Calu3 (cell line): ENCODE measurements at regions of chr17 and their contacts with region 1.

Region 1: DNA sequence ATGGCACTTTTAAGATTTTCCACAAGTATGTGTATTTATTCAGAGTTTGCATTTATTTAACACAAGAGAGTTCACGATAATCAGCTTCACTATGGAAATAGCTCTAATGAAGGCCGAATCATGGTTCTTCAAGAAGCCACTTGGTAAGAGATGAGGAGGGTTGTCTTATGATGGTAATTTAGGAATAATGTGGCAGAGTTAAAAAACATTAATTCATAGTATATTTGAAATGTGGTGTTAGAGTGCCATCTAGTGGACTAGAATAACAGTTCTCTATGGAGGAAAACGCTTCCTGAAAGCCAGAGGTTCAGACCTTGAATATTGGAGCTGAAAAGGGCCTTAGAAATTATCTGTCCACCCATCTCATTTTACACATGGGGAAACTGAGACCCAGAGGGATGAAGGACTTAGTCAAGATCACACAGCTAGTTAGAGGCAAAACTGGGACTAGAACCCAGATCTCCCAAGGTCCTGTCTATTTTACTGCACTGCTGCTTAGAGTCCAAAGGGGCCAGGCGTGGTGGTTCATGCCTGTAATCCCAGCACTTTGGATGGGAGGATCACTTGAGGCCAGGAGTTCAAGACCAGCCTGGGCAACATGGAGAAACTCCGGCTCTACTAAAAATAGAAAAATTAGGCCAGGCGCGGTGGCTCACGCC is 33.8 kb upstream of the KPNB1 start:
- DNase-seq: no peak
- H3K4me3 Mint-ChIP-seq: no peak overlapping the region
- H3K27ac Mint-ChIP-seq: peak overlapping the region; percentile 65
- H3K4me1 Mint-ChIP-seq: peaks cover 37% of the 10 kb centered on the region
- H3K27me3 Mint-ChIP-seq: no peaks in the 10 kb centered on the region
- CTCF ChIP-seq: peak; percentile 72

Region 2: DNA sequence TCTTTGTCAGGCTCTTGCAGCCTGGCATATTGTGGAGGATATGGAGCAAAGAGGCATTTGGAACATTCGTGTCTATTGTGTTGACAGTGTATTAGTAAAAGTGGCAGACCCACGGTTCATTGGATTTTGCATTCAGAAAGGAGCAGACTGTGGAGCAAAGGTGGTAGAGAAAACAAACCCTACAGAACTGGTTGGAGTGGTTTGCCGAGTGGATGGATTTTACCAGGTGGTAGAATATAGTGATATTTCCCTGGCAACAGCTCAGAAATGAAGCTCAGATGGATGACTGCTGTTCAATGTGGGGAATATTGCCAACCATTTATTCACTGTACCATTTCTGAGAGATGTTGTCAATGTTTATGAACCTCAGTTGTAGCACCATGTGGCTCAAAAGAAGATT is 247.6 kb before region 1 on chr17:
- CTCF ChIA-PET with region 1: no interaction called
- intact Hi-C with region 1: loop called (anchors 10 kb)
- DNase-seq: peak; percentile 21
- H3K4me3 Mint-ChIP-seq: no peak overlapping the region
- H3K27ac Mint-ChIP-seq: no peak overlapping the region
- H3K4me1 Mint-ChIP-seq: no peaks in the 10 kb centered on the region
- H3K27me3 Mint-ChIP-seq: no peaks in the 10 kb centered on the region
- CTCF ChIP-seq: no peak

Region 3: DNA sequence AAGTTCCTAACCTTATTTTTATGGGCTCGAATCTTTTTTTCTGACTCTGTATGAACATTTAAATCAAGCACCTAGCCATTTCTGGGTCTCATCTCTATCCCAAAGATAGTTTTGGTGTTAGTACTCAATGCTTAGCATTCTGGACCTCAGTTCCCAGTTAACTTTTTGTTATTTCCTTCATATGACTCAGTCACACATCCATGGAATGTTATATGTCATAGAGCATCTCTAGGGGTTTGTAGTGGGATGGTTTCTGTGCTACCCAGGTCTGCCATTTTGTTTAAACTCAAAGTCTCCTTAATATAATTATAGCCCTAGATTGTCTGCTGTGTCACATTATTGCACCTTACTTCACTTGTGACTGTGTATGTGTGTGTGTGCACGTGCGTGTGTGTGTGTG is 202.0 kb before region 1 on chr17:
- CTCF ChIA-PET with region 1: no interaction called
- intact Hi-C with region 1: no loop called
- DNase-seq: no peak
- H3K4me3 Mint-ChIP-seq: no peak overlapping the region
- H3K27ac Mint-ChIP-seq: no peak overlapping the region
- H3K4me1 Mint-ChIP-seq: no peaks in the 10 kb centered on the region
- H3K27me3 Mint-ChIP-seq: no peaks in the 10 kb centered on the region
- CTCF ChIP-seq: no peak